ENCODE measurements at regions of chr14 and their contacts with region 1.

Region 1: DNA sequence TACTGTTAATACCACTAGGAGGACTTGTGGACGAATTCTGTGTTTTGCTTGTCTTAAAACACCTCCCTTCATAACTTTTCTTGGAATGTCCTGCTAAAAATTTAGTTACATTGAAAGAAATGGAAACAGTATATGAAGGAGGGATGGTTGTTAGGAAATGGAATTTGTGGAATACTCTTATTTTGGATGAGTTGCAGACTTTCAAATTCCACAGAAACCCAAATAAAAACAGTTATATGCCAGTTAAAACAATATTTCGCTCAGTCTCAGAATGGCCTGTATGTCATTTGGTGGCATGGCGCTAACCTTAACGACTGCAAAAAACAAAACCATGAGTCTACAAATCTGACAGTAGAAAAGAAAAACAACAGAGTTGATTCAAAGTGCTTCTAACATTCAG is 12.2 kb upstream of the ARHGAP5 start:
- DNase-seq: no peak
- ATAC-seq: no peak
- H3K4me3 ChIP-seq: no peak overlapping the region
- H3K27ac ChIP-seq: no peak overlapping the region
- H3K4me1 ChIP-seq: no peaks in the 10 kb centered on the region
- H3K27me3 ChIP-seq: no peaks in the 10 kb centered on the region
- CTCF ChIP-seq: no peak
- EP300 ChIP-seq: no peak
- POLR2A ChIP-seq: no peak
- RAD21 ChIP-seq: no peak

Region 2: GRCh38 chr14:32469388-32470160 is 404.6 kb after region 1 on chr14:
- CTCF ChIA-PET with region 1: no interaction called
- POLR2A ChIA-PET with region 1: no interaction called
- RAD21 ChIA-PET with region 1: no interaction called
- SMC1A ChIA-PET with region 1: no interaction called
- in situ Hi-C with region 1: loop called (anchors 10 kb)
- intact Hi-C with region 1: loop called (anchors 10 kb)
- DNase-seq: no peak
- ATAC-seq: peak; percentile 51
- H3K4me3 ChIP-seq: no peak overlapping the region
- H3K27ac ChIP-seq: no peak overlapping the region
- H3K4me1 ChIP-seq: no peaks in the 10 kb centered on the region
- H3K27me3 ChIP-seq: no peaks in the 10 kb centered on the region
- CTCF ChIP-seq: peak; percentile 29 to 56 (median 31); a peak in 3 of 6 replicates
- EP300 ChIP-seq: no peak
- POLR2A ChIP-seq: no peak
- RAD21 ChIP-seq: peak; percentile 68

Measured in GM12878 (cell line).